Activated T-helper 2 cell treated with anti-CD3 and anti-CD28 coated beads, Interferon-gamma antibody, Interleukin-2, Interleukin-4, amounts not matched to agents 10 μg/mL and 5 μg/mL and 100 μg/mL, durations not matched to agents 14 hours and 24 hours and 36 hours (primary cell): ENCODE measurements at regions of chr11 and their contacts with region 1.

Region 1: GRCh38 chr11:67265633-67266423 is 445 bp upstream of the GRK2 start:
- DNase-seq: peak; percentile 77
- H3K4me3 Mint-ChIP-seq: peak overlapping the region; percentile 78
- H3K27ac Mint-ChIP-seq: peak overlapping the region; percentile 85
- H3K4me1 Mint-ChIP-seq: peaks cover 65% of the 10 kb centered on the region
- H3K27me3 Mint-ChIP-seq: no peaks in the 10 kb centered on the region

Region 2: GRCh38 chr11:67239783-67240575 is 25.8 kb before region 1 on chr11:
- intact Hi-C with region 1: loop called (anchors 2 kb)
- DNase-seq: peak; percentile 97
- H3K4me3 Mint-ChIP-seq: peak overlapping the region; percentile 99
- H3K27ac Mint-ChIP-seq: peak overlapping the region; percentile 99
- H3K4me1 Mint-ChIP-seq: peaks cover 30% of the 10 kb centered on the region
- H3K27me3 Mint-ChIP-seq: no peaks in the 10 kb centered on the region

Region 3: DNA sequence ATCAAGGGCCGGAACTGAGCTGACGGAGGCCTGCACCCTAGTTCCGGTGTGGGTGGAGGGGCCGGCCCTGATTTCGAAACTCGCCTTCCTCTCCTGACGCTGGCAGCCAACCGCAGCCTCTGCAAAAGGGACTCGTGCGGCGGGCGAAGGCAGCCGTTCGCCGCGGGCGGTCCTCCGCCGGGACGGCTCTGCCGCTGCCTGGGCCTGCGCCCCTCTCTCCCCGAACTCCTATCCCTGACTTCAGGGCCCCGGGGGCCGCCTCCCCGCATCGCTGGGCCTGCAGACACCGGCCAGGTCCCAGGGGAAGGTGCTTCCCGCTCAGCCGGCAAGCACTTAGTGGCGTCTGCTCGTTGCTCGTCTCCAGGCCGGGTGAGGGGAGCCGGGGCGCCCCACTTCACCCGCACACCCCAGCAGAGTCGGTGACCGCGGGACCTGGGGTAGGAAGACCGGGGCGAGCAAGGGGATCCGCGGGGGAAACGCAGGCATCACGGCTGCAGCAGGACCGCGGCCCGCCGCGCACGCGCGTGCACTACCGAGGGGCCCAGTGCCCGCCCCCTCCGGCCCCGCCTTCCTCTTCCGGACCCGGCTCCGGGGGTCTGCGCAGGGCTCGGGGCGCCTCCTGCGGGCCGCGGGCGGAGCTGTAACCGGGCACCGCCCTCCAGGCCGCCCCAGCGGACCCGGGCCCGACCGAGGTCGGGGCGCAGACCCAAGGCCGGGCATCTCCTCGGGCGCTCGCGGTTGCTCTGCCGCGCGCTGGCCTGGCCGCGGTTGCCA is 22.8 kb after region 1 on chr11:
- intact Hi-C with region 1: loop called (anchors 1 kb)
- DNase-seq: peak; percentile 89
- H3K4me3 Mint-ChIP-seq: peak overlapping the region; percentile 81
- H3K27ac Mint-ChIP-seq: peak overlapping the region; percentile 96
- H3K4me1 Mint-ChIP-seq: peaks cover 44% of the 10 kb centered on the region
- H3K27me3 Mint-ChIP-seq: no peaks in the 10 kb centered on the region

Region 4: DNA sequence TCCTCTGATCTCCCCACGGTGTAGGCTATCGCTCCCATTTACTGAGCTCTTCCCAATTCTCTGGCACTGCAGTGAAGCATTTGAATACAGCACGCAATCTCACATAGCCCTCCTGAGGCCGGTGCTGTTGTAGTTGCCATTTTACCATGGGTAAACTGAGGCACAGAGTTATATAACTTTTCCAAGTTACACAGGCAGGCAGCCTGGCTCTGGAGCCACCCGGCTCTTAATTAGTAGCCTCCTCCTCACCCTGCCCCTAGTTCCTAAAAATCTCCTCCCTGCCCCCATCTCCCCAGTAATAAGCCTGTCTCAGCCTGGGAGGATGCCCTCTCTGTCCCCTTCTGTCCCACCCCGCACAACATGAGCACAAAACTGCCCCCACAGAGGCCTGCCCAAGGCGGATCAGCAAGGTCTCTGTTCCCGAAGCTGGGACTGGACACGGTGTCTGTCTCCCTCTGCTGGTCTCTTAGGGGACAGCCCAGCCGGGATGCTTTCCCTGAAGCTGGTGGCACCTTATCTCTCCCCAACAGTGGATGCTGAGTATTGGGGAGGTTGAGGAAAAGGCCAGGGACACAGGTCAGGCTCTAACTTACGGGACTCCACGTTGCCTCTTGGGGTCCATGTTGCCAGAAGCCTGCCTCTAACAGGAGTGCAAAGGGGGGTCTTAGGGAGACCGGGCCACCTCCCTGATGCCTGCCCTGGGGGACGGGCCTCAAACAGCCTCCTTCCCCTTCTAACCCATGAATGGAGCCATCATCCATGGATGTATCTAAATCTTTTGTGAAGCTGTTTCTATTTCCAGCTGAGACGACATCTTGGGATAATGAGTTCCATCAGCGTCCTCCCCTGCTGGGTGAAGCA is 116.7 kb after region 1 on chr11:
- intact Hi-C with region 1: loop called (anchors 5 kb)
- DNase-seq: peak; percentile 73
- H3K4me3 Mint-ChIP-seq: no peak overlapping the region
- H3K27ac Mint-ChIP-seq: no peak overlapping the region
- H3K4me1 Mint-ChIP-seq: peaks cover 5% of the 10 kb centered on the region
- H3K27me3 Mint-ChIP-seq: peaks cover 17% of the 10 kb centered on the region

Region 5: GRCh38 chr11:67401495-67402191 is 135.8 kb after region 1 on chr11 and contains the start of gene PPP1CA:
- intact Hi-C with region 1: loop called (anchors 5 kb)
- DNase-seq: peak; percentile 86
- H3K4me3 Mint-ChIP-seq: peak within 1 kb of the TSS; percentile 97
- H3K27ac Mint-ChIP-seq: peak within 1 kb of the TSS; percentile 83
- H3K4me1 Mint-ChIP-seq: peaks cover 40% of the 10 kb centered on the region
- H3K27me3 Mint-ChIP-seq: no peaks in the 10 kb centered on the region
- total RNA-seq, gene PPP1CA: 250 and 262 TPM in 2 replicates

Region 6: GRCh38 chr11:67534070-67534679 is 268.3 kb after region 1 on chr11:
- intact Hi-C with region 1: no loop called
- DNase-seq: no peak
- H3K4me3 Mint-ChIP-seq: no peak overlapping the region
- H3K27ac Mint-ChIP-seq: no peak overlapping the region
- H3K4me1 Mint-ChIP-seq: no peaks in the 10 kb centered on the region
- H3K27me3 Mint-ChIP-seq: peaks cover 4% of the 10 kb centered on the region